HCT116 (cell line): ENCODE measurements at regions of chr17 and their contacts with region 1.

Region 1: GRCh38 chr17:39164675-39165143 is 1.3 kb downstream of the ARL5C start:
- DNase-seq: peak; percentile 69
- ATAC-seq: peak; percentile 92
- H3K4me3 ChIP-seq: peak overlapping the region in 1 of 2 experiments; percentile 7; a peak in 2 of 4 replicates
- H3K27ac ChIP-seq: no peak overlapping the region; the same call in 1 of the 2 replicates
- H3K4me1 ChIP-seq: peaks cover 6 to 10% of the 10 kb centered on the region in 2 experiments; a peak in 3 of 4 replicates
- H3K27me3 ChIP-seq: no peaks in the 10 kb centered on the region
- CTCF ChIP-seq: peak; percentile 69 to 92 (median 88); a peak in 5 of 6 replicates
- POLR2A ChIP-seq: no peak
- RAD21 ChIP-seq: peak; percentile 64

Region 2: GRCh38 chr17:39174907-39175694 is 10.4 kb after region 1 on chr17:
- CTCF ChIA-PET with region 1: interaction called, 62 read pairs
- POLR2A ChIA-PET with region 1: interaction called, 3 read pairs
- RAD21 ChIA-PET with region 1: no interaction called
- intact Hi-C with region 1: no loop called
- DNase-seq: peak; percentile 26
- ATAC-seq: peak; percentile 74
- H3K4me3 ChIP-seq: no peak overlapping the region
- H3K27ac ChIP-seq: no peak overlapping the region
- H3K4me1 ChIP-seq: peaks cover 5 to 27% of the 10 kb centered on the region in 2 experiments; a peak in 3 of 4 replicates
- H3K27me3 ChIP-seq: no peaks in the 10 kb centered on the region
- CTCF ChIP-seq: peak in 2 of 3 experiments; percentile 80 to 83; a peak in 4 of 6 replicates
- POLR2A ChIP-seq: no peak
- RAD21 ChIP-seq: peak; percentile 63

Region 3: GRCh38 chr17:39199820-39200069 is 35.0 kb after region 1 on chr17:
- CTCF ChIA-PET with region 1: interaction called, 6 read pairs
- POLR2A ChIA-PET with region 1: interaction called, 11 read pairs
- RAD21 ChIA-PET with region 1: interaction called in 1 of 2 experiments, 6 read pairs
- intact Hi-C with region 1: no loop called
- DNase-seq: peak; percentile 93
- ATAC-seq: peak; percentile 51
- H3K4me3 ChIP-seq: peak overlapping the region; percentile 66 to 82
- H3K27ac ChIP-seq: peak overlapping the region; percentile 93
- H3K4me1 ChIP-seq: peaks cover 24 to 54% of the 10 kb centered on the region in 2 experiments
- H3K27me3 ChIP-seq: no peaks in the 10 kb centered on the region
- CTCF ChIP-seq: no peak
- POLR2A ChIP-seq: peak; percentile 70
- RAD21 ChIP-seq: no peak

Region 4: GRCh38 chr17:39235555-39236449 is 71.1 kb after region 1 on chr17:
- CTCF ChIA-PET with region 1: interaction called, 11 read pairs
- POLR2A ChIA-PET with region 1: no interaction called
- RAD21 ChIA-PET with region 1: no interaction called
- intact Hi-C with region 1: no loop called
- DNase-seq: peak; percentile 87
- ATAC-seq: peak; percentile 83
- H3K4me3 ChIP-seq: no peak overlapping the region; a peak in 1 of 4 replicates
- H3K27ac ChIP-seq: no peak overlapping the region
- H3K4me1 ChIP-seq: peaks cover 18 to 52% of the 10 kb centered on the region in 2 experiments
- H3K27me3 ChIP-seq: no peaks in the 10 kb centered on the region
- CTCF ChIP-seq: peak; percentile 98 to 99 (median 99)
- POLR2A ChIP-seq: no peak
- RAD21 ChIP-seq: peak; percentile 41; the same call in 1 of the 2 replicates

Region 5: GRCh38 chr17:39244600-39245570 is 80.2 kb after region 1 on chr17:
- CTCF ChIA-PET with region 1: interaction called, 18 read pairs
- POLR2A ChIA-PET with region 1: no interaction called
- RAD21 ChIA-PET with region 1: interaction called in 1 of 2 experiments, 4 read pairs
- intact Hi-C with region 1: no loop called
- DNase-seq: peak; percentile 80
- ATAC-seq: peak; percentile 95
- H3K4me3 ChIP-seq: no peak overlapping the region
- H3K27ac ChIP-seq: no peak overlapping the region
- H3K4me1 ChIP-seq: peaks cover under 1 to 13% of the 10 kb centered on the region in 2 experiments; a peak in 3 of 4 replicates
- H3K27me3 ChIP-seq: no peaks in the 10 kb centered on the region
- CTCF ChIP-seq: peak; percentile 91 to 96 (median 95)
- POLR2A ChIP-seq: no peak
- RAD21 ChIP-seq: peak; percentile 95